Sigmoid colon (tissue), 7 donors: ENCODE measurements at regions of chr1 and their contacts with region 1.

Region 1: GRCh38 chr1:151739590-151740375 is 18.5 kb downstream of the RIIAD1 start:
- DNase-seq: no peak
- H3K4me3 ChIP-seq: no peak overlapping the region
- H3K27ac ChIP-seq: no peak overlapping the region
- H3K4me1 ChIP-seq: no peaks in the 10 kb centered on the region
- H3K27me3 ChIP-seq: no peaks in the 10 kb centered on the region
- CTCF ChIP-seq: no peak
- EP300 ChIP-seq: no peak
- POLR2A ChIP-seq: no peak

Region 2: DNA sequence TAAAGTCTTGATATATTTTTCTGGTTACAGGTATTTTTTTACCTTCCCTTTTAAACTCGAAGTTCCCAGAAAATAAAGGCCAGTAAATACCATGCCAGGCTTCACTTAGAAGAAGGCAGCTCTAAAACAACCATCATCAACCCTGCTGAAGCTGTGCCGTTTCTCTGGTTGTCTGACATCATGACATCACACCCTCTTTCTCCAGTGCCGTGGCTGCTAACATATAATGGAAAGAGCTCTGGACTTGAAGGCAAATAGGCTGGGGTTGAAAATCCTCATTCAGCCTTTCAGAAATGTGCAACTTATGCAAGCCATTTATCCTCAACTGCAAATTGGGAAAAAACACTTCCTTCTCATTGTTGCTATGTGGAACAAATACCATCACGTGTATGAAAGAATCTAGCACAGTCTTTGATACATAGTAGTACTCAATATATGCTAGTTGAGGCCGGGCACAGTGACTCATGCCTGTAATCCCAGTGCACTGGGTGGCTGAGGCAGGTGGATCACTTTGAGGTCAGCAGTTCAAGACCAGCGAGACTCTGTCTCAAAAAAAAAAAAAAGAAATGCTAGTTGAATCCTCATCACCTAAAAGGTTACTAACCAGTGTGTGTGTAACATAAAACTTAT is 420.9 kb before region 1 on chr1:
- intact Hi-C with region 1: no loop called
- DNase-seq: no peak
- H3K4me3 ChIP-seq: no peak overlapping the region
- H3K27ac ChIP-seq: no peak overlapping the region
- H3K4me1 ChIP-seq: peaks cover 0 to 35% (median 21%) of the 10 kb centered on the region in 4 donors
- H3K27me3 ChIP-seq: no peaks in the 10 kb centered on the region
- CTCF ChIP-seq: no peak
- EP300 ChIP-seq: no peak
- POLR2A ChIP-seq: no peak

Region 3: DNA sequence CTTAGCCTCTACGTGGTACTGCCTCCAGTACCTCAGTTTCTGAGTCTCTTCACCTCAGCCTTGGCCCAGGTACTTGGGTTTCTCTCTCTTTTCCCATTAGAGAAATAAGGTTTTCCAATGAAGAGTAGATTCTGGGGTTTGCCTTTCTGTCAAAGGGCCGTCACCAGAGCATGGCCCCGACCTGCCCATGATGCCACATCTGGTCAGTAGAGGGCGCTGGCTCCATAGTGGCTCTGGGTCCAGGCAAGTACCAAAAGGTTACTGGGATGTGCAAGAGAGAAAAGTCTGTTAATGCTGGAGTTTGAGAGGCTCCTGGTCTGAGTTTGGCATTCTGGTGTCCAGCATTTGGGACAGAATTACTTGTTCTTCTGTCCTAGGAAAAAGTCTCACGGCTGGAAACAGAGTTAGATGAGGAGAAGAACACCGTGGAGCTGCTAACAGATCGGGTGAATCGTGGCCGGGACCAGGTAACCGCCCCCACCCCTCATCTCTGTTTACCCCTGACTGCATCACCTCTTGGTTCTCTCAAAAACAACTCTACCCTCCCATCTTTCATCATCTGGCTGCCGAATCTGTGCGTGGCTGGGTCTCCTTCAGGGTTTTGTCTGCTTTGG is 205.0 kb before region 1 on chr1:
- intact Hi-C with region 1: loop called (anchors 1 kb)
- DNase-seq: peak; percentile 82
- H3K4me3 ChIP-seq: no peak overlapping the region
- H3K27ac ChIP-seq: no peak overlapping the region
- H3K4me1 ChIP-seq: peaks cover 0 to 7% (median 6%) of the 10 kb centered on the region in 4 donors
- H3K27me3 ChIP-seq: no peaks in the 10 kb centered on the region
- CTCF ChIP-seq: peak; percentile 52 to 82 (median 80)
- EP300 ChIP-seq: no peak
- POLR2A ChIP-seq: no peak

Region 4: GRCh38 chr1:151594143-151594625 is 145.6 kb before region 1 on chr1:
- intact Hi-C with region 1: loop called (anchors 1 kb)
- DNase-seq: peak; percentile 87
- H3K4me3 ChIP-seq: peak overlapping the region in 1 of 4 donors; percentile 11
- H3K27ac ChIP-seq: no peak overlapping the region
- H3K4me1 ChIP-seq: no peaks in the 10 kb centered on the region
- H3K27me3 ChIP-seq: no peaks in the 10 kb centered on the region
- CTCF ChIP-seq: peak; percentile 58 to 87 (median 84)
- EP300 ChIP-seq: no peak
- POLR2A ChIP-seq: no peak

Region 5: DNA sequence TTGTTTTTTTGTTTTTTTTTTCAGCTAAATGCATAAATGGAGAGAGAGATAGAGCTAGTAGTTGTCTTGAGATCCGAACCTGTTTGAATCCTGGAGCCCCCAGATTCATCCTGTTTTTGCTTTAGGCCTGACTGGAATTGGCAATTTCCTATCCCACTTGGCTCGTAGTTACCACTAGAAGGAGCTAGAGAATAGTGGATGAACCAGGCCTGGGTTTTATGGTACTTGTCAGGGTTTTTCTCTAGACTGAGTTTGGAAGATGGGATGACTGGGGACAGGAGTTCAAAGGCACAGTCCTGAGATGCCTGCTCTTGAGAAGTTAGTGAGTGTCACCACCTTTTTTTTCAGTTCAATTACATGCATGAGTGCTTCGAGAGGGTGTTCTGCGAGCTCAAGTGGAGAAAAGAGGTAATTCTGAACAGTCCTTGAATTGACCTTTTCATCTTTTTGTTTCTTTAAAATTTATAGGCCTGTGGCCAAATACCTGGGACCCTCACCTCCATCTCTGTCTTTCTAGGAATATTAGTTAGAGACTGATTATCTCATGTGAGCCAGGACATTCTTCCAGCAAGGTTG is 46.6 kb before region 1 on chr1:
- intact Hi-C with region 1: loop called (anchors 1 kb)
- DNase-seq: no peak
- H3K4me3 ChIP-seq: no peak overlapping the region
- H3K27ac ChIP-seq: no peak overlapping the region
- H3K4me1 ChIP-seq: peaks cover 0 to 9% (median 4%) of the 10 kb centered on the region in 4 donors
- H3K27me3 ChIP-seq: no peaks in the 10 kb centered on the region
- CTCF ChIP-seq: peak in 3 of 4 experiments; percentile 27 to 54 (median 40)
- EP300 ChIP-seq: no peak
- POLR2A ChIP-seq: no peak